ENCODE measurements at regions of chr14 and their contacts with region 1.

Region 1: DNA sequence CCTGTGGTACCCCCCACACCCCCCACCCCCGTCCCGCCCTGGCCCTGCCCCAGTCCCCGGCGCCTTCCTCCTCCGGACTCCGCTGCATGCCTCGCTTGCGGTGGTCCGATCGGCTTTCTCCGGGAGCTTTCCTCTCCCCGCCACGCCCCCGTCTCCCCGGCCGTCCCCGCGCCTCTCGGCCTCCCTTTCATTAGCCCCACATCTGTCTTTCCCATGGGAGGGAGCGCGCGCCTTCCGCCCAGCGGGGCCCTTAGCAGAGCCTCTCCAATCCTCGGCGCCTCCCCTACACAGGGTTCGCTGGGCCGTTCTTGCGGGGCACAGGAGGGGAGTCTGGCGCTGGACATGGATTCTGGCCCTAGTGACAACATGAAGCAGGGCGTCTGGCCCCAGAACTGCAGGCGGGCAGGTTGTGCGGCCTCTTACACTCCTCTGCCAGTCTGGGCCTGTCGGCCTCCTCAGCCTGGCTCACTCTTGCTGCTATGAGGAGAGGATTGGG is 1.5 kb upstream of the EFS start:
- DNase-seq: peak; percentile 93
- ATAC-seq: peak; percentile 63
- H3K4me3 Mint-ChIP-seq: peak overlapping the region; percentile 71
- H3K27ac Mint-ChIP-seq: peak overlapping the region; percentile 75
- H3K4me1 Mint-ChIP-seq: peaks cover 27% of the 10 kb centered on the region
- H3K27me3 Mint-ChIP-seq: peaks cover 51% of the 10 kb centered on the region
- CTCF ChIP-seq: no peak

Region 2: DNA sequence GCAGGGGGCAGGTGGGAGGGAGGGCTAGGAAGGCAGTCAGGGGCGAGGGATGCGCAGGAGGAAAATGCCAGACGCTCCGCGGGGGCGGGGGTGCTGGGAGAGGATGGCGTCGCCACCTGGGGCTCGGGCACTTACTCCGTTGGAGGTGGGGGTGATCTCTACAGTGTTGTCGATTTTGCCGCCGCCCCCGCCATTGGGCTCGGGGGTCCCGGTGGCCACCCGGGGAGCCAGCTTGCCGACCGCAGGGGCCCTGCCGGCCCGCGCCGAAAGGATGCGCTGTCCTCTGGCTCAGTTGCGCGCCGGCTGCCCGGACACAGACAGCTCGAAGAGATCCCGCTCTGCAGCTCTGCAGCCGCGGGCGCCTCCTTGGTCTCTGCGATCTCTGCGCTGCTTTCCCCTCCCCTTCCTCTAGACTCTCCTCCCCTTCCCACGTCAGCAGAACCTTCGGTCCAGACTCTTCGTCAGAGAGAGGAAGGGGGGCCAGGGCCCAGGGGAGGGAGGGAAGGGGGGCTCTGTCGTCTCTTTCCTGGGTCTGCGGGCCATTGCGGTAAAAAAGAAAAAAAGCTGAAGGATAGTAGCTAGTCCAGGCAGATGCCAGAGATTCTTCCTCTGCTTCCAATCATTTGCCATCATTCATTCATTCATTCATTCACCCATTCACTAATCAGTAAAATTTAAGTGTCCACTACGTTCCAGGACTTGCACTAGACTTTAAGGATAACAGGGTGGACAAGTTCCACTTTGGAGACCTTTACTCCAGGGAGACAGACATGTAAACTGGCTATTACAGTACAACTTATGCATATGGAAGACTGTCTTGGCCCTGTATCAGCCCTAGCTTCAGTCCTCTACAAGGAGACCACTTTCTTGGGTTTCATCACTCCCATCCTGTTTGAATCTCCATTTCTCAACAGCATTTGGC is 13.7 kb before region 1 on chr14 and contains the start of gene SLC22A17:
- CTCF ChIA-PET with region 1: interaction called, 73 read pairs
- POLR2A ChIA-PET with region 1: interaction called, 11 read pairs
- DNase-seq: peak; percentile 84
- ATAC-seq: peak; percentile 90
- H3K4me3 Mint-ChIP-seq: peak within 1 kb of the TSS; percentile 63
- H3K27ac Mint-ChIP-seq: peak within 1 kb of the TSS; percentile 67
- H3K4me1 Mint-ChIP-seq: peaks cover 11% of the 10 kb centered on the region
- H3K27me3 Mint-ChIP-seq: peaks cover 43% of the 10 kb centered on the region
- CTCF ChIP-seq: no peak
- total RNA-seq, gene SLC22A17: 42.3 to 52.4 TPM (median 51.4 TPM) in 3 replicates

Region 3: DNA sequence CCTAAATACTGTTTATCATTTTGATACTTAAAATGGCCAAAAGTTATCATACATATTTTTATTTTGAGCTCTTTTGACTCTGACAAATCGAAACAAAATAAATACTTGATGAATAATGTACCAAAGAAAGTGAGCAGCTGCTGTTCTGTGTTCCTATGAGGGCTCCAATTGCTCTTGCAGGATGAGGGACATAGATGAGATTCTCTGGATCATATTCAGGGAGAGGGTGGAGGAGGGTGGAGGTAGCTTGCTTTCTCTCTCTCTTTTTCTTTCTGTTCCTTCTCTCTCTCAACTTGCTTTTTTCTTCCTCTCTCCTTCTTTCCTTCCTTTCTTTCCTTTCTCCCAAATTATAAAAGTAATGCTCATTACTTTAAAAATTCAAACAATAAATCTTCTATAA is 77.8 kb after region 1 on chr14:
- CTCF ChIA-PET with region 1: no interaction called
- POLR2A ChIA-PET with region 1: no interaction called
- DNase-seq: no peak
- ATAC-seq: no peak
- H3K4me3 Mint-ChIP-seq: no peak overlapping the region
- H3K27ac Mint-ChIP-seq: no peak overlapping the region
- H3K4me1 Mint-ChIP-seq: peaks cover 19% of the 10 kb centered on the region
- H3K27me3 Mint-ChIP-seq: peaks cover 21% of the 10 kb centered on the region
- CTCF ChIP-seq: no peak